Ascending aorta (tissue), 2 donors: ENCODE measurements at regions of chr10 and their contacts with region 1.

Region 1: DNA sequence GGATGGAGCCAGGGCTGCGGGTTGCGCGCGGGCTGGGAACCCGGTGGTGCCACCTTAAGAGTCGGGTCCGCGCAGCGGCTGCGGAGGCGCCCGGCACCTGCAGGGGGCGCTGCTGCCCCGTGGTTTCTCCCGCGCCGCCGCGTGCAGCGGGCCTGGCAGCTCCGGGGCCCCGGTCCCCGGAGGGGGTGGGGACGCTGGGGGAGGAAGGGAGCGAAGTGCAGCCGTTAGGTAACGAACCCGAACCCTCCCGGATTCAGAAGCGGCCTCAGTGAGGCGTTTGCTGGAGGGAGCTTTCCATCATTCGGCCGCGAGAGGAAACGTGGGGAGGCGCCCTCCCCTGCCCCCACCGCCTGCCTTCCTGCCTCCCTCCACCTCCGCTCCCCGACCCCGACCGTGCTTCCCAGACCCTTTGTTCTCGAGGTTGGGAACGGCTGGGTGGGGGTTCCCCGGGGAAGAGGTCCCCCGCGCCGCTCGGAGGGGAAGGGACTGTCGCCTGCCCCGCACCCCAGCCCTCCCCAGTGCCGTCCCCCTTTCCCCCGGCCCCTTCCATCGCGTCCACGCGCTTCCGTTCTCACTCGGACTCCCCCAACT is 29.6 kb downstream of the SKIDA1 start:
- DNase-seq: peak in 1 of 2 donors; percentile 91
- H3K4me3 ChIP-seq: peak overlapping the region; percentile 68 to 95
- H3K27ac ChIP-seq: peak overlapping the region; percentile 35 to 51
- H3K4me1 ChIP-seq: peaks cover 6% of the 10 kb centered on the region in 2 donors
- H3K27me3 ChIP-seq: no peaks in the 10 kb centered on the region
- CTCF ChIP-seq: peak; percentile 84 to 98 (median 92)

Region 2: GRCh38 chr10:21292763-21293517 is 202.9 kb before region 1 on chr10:
- intact Hi-C with region 1: loop called (anchors 5 kb)
- DNase-seq: peak in 1 of 2 donors; percentile 85
- H3K4me3 ChIP-seq: peak overlapping the region; percentile 27 to 47
- H3K27ac ChIP-seq: no peak overlapping the region
- H3K4me1 ChIP-seq: peaks cover 0 to 6% of the 10 kb centered on the region in 2 donors
- H3K27me3 ChIP-seq: no peaks in the 10 kb centered on the region
- CTCF ChIP-seq: no peak

Region 3: GRCh38 chr10:21385996-21386610 is 109.7 kb before region 1 on chr10:
- intact Hi-C with region 1: no loop called
- DNase-seq: no peak
- H3K4me3 ChIP-seq: no peak overlapping the region
- H3K27ac ChIP-seq: no peak overlapping the region
- H3K4me1 ChIP-seq: no peaks in the 10 kb centered on the region
- H3K27me3 ChIP-seq: no peaks in the 10 kb centered on the region
- CTCF ChIP-seq: no peak

Region 4: GRCh38 chr10:21464143-21464533 is 31.7 kb before region 1 on chr10:
- intact Hi-C with region 1: no loop called
- DNase-seq: peak in 1 of 2 donors; percentile 5
- H3K4me3 ChIP-seq: no peak overlapping the region
- H3K27ac ChIP-seq: no peak overlapping the region
- H3K4me1 ChIP-seq: no peaks in the 10 kb centered on the region
- H3K27me3 ChIP-seq: no peaks in the 10 kb centered on the region
- CTCF ChIP-seq: no peak

Region 5: DNA sequence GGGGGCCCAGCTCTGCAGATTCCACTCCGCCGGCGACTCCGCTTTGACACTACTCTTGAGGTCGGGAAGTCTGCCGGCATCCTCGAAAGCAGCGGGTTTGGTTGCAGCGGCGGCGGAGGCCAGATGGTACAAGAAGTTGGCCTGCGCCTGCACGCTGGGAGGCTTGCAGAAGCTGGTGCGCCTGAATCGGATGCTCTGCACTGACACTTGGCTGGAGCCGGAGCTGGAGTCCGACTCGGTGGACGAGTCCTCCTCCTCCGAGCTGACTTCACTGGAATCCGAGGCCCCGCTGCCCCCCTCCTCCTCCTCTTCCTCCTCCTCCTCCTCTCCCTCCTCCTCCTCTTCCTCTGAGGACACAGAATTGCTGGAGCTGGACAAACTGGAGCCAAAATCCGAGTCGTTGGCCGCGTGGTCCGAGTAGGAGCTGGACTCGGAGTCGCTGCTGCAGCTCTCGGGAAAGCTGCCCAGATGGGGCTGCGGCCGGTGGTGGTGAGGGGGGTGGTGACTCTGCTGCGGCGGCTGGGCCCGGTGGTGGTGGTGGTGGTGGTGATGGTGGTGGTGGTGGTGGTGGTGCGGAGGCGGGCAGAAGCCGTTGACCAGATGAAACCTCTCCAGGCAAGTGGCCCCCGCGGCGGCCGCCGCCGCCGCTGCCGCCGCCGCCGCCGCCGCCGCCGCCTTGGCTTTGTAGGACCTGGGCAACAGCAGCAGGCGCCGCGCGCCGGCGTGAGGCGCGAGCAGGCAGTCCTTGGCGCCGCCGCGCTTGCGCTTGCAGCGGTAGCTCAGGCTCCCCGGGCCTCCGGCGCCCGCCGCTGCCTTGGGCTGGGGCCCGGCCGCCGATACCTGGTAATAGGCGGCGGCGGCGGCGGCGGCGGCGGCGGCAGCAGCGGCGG is 20.6 kb after region 1 on chr10:
- intact Hi-C with region 1: loop called (anchors 2 kb)
- DNase-seq: peak in 1 of 2 donors; percentile 78
- H3K4me3 ChIP-seq: peak overlapping the region; percentile 63 to 88
- H3K27ac ChIP-seq: peak overlapping the region in 1 of 2 donors; percentile 69
- H3K4me1 ChIP-seq: peaks cover 0 to 13% of the 10 kb centered on the region in 2 donors
- H3K27me3 ChIP-seq: no peaks in the 10 kb centered on the region
- CTCF ChIP-seq: no peak

Region 6: DNA sequence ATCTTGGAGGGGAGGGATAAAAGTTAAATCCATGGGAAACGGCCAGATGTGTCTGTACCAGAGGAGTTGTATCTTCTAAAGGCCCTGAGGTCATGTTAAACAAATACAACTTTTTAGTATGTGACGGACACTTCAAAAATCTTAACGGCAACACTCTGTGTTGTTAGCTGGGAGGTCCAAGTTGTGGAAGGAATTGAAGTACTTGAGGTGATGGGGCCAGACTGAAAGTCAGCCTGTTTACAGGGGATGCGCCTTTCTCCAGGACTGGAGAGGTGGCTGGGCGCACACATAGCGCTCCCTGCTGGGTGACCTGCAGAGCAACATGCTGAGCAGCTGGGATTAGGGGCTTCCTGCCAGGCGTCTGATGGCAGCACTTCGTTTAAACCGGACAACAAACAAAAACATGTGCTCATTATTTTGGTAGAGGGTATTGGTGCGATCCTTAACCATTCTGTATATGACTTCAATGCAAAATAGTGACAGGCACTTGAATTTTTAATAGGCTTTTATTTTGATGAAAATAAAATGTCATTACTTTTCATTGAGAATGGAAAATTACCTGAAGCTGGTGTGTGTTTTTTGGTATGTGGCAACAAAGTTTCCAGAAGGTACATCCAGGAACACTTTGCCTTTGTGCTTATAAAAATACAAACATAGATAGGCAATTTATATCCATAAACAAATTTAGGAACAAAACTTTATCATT is 236.4 kb after region 1 on chr10:
- intact Hi-C with region 1: loop called (anchors 1 kb)
- DNase-seq: no peak
- H3K4me3 ChIP-seq: no peak overlapping the region
- H3K27ac ChIP-seq: no peak overlapping the region
- H3K4me1 ChIP-seq: no peaks in the 10 kb centered on the region
- H3K27me3 ChIP-seq: no peaks in the 10 kb centered on the region
- CTCF ChIP-seq: peak; percentile 62 to 79 (median 74)

Region 7: DNA sequence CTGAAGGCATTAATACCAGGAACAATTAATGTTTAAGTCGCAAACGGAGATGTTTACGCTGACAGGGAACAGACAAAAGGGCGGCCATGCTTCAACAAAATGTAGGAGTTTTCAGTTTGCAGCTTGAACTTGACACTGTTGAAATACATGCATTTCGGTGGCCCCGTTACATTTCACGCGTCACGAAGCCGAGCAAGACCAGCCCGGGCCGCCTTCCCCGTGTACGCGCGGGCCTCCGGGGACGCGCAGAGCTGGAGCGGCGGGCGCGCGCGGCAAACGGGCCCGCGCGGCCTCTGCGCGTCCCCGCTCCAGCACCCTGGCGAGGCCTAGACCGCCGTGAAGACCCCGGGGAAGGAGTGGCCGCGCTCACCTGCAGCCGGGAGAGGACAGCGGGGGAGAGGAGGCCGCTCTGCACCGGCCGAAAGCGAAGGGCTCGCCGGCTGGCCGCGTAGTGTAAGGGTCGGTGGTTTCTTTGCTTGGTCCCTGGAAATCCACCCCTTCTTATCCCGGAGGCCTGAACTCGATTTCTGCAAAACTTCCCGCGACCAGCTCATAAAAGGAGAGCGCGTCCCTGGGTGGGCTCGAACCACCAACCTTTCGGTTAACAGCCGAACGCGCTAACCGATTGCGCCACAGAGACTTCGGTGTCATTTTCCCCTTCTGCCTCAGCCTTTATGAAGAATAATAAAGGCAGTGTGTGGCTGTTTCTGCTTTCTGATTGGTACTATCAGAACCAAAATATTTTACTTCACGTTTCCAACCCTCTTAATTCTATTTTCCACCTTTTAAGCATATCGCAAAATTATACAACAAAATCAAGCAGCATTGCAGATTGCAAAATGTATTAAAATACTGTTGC is 733.3 kb after region 1 on chr10:
- intact Hi-C with region 1: loop called (anchors 5 kb)
- DNase-seq: peak; percentile 41 to 92
- H3K4me3 ChIP-seq: peak overlapping the region; percentile 63 to 70
- H3K27ac ChIP-seq: peak overlapping the region; percentile 80 to 85
- H3K4me1 ChIP-seq: peaks cover 0 to 3% of the 10 kb centered on the region in 2 donors
- H3K27me3 ChIP-seq: no peaks in the 10 kb centered on the region
- CTCF ChIP-seq: no peak

Region 8: GRCh38 chr10:22316285-22317120 is 820.7 kb after region 1 on chr10 and contains the start of gene COMMD3:
- intact Hi-C with region 1: loop called (anchors 5 kb)
- DNase-seq: peak in 1 of 2 donors; percentile 93
- H3K4me3 ChIP-seq: peak within 1 kb of the TSS; percentile 91 to 94
- H3K27ac ChIP-seq: peak within 1 kb of the TSS; percentile 89 to 90
- H3K4me1 ChIP-seq: peaks cover 4 to 27% of the 10 kb centered on the region in 2 donors
- H3K27me3 ChIP-seq: no peaks in the 10 kb centered on the region
- CTCF ChIP-seq: no peak
- total RNA-seq, gene COMMD3: 21.9 TPM

Region 9: GRCh38 chr10:23067939-23068775 is 1572.3 kb after region 1 on chr10:
- intact Hi-C with region 1: loop called (anchors 5 kb)
- DNase-seq: peak in 1 of 2 donors; percentile 93
- H3K4me3 ChIP-seq: no peak overlapping the region
- H3K27ac ChIP-seq: peak overlapping the region; percentile 28 to 33
- H3K4me1 ChIP-seq: peaks cover 5 to 12% of the 10 kb centered on the region in 2 donors
- H3K27me3 ChIP-seq: no peaks in the 10 kb centered on the region
- CTCF ChIP-seq: peak; percentile 44 to 87 (median 86)